Heart right ventricle (tissue), 16 donors: ENCODE measurements at regions of chr1 and their contacts with region 1.

Region 1: GRCh38 chr1:193539731-193540459 is 353.5 kb upstream of the B3GALT2 start:
- DNase-seq: no peak
- ATAC-seq: no peak
- H3K4me3 ChIP-seq: peak overlapping the region in 1 of 10 donors; percentile 5
- H3K27ac ChIP-seq: peak overlapping the region in 1 of 10 donors; percentile 62
- H3K4me1 ChIP-seq: peaks cover 0 to 16% (median 0%) of the 10 kb centered on the region in 9 donors
- H3K27me3 ChIP-seq: no peaks in the 10 kb centered on the region
- CTCF ChIP-seq: no peak

Region 2: DNA sequence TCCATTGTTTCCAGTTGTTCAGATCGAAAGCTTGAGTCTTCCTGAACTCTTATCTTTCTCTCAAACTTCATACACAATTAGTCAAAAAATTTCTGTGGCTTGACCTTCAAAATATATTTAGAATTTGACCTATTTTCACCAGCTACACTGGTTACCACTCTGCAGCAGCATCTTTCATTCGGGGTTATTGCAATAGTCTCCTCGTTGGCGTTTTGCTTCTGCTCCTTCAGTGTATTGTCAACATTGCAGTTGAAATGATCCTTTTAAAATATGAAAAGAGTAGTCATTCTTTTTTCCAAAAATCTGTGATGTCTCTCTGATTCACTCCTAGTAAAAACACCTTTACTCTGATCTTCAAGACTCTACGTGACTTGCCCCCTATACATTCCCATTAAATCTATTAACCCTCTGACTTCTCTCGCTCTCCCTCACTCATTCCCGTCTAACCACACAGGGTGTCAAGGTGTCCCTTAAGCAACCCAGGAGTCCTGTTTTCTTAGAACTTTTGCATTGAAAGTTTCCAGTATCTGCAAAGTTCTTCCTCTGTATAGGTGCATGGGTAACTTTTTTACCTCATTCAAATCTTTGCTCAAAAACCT is 126.7 kb after region 1 on chr1:
- intact Hi-C with region 1: loop called in 1 of 10 experiments (anchors 5 kb)
- DNase-seq: no peak
- ATAC-seq: no peak
- H3K4me3 ChIP-seq: no peak overlapping the region
- H3K27ac ChIP-seq: no peak overlapping the region
- H3K4me1 ChIP-seq: no peaks in the 10 kb centered on the region
- H3K27me3 ChIP-seq: no peaks in the 10 kb centered on the region
- CTCF ChIP-seq: no peak